Vagina (tissue), 2 donors: ENCODE measurements at regions of chr9 and their contacts with region 1.

Region 1: DNA sequence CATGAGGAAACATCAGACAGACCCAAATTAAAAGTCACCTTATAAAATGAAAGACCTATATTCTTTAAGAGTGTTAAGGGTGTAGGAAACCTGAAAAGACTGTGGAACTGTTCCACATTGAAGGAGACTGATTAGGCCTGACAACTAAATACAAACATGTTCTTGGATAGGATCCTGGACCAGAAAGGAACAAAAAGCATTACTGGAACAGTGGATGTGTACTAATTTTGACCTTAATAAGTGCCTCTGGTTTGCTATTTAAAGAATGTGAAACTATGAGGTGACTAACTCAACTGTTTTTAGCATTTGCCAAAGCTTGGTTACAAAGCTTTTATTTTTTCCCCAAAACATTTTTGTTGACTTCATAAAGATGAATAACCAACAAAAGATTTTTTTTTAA is 340.6 kb downstream of the CAAP1 start:
- DNase-seq: no peak
- H3K4me3 ChIP-seq: no peak overlapping the region
- H3K27ac ChIP-seq: no peak overlapping the region
- H3K4me1 ChIP-seq: peaks cover 10% of the 10 kb centered on the region
- H3K27me3 ChIP-seq: no peaks in the 10 kb centered on the region
- CTCF ChIP-seq: no peak
- POLR2A ChIP-seq: no peak

Region 2: DNA sequence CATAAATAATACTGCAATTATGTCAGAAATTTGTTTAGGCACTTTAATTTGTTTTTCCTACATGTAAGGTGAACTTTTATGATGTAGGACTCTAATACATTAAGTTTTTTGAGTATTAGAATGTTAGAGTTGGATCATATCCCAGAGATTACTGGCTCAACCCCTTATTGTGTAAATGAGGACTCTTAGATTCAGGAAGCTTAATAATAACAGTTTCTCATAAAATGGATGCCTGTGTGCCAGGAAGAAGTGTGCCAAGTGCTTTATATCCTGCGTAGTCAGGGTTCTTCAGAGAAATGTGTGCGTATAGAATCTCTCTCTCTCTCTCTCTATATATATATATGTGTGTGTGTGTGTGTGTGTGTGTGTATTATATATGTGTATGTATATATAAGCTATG is 47.9 kb before region 1 on chr9:
- intact Hi-C with region 1: loop called (anchors 1 kb)
- DNase-seq: no peak
- H3K4me3 ChIP-seq: no peak overlapping the region
- H3K27ac ChIP-seq: no peak overlapping the region
- H3K4me1 ChIP-seq: no peaks in the 10 kb centered on the region
- H3K27me3 ChIP-seq: no peaks in the 10 kb centered on the region
- CTCF ChIP-seq: no peak
- POLR2A ChIP-seq: no peak